Cardiac septum (tissue), 1 donor: ENCODE measurements at regions of chr1 and their contacts with region 1.

Region 1: DNA sequence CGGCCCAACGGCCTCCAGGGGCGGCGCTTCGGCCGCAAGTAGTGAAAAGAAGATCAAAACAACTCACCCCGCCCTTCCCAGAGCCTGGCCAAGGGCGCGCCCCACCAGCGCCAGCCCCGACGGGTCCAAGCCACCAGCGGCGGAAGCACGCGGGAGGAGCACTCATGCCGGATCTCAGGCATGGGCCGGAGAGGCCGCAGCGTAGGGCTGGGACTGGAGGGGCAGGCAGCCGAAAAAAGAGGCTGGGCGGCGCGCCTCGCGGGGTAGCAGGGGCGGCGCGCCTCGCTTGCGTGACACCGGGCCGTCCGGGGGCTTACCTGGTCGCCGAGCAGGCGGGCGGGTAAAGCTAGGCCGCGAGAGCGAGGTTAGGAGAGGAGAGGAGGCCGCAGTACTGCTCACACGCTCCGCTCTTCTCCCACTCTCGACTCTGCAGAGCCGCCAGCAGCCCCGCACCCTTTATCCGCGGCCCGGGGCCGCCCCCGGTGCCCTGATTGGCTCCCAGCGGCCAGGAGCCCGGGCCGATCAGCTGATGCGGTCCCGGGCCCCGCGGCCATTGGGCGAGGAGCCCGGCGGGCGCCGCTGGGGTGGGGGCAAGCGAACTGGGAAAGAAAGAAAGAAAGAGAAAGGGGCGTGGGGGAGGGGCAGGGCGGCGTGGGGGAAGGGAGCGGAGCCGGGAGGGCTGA is at the start of gene GLUL:
- DNase-seq: peak; percentile 96
- total RNA-seq, gene GLUL: 231 TPM

Region 2: GRCh38 chr1:182084487-182085316 is 306.8 kb before region 1 on chr1:
- intact Hi-C with region 1: loop called (anchors 1 kb)
- DNase-seq: peak; percentile 93

Region 3: GRCh38 chr1:182143154-182143657 is 248.3 kb before region 1 on chr1:
- intact Hi-C with region 1: loop called (anchors 1 kb)
- DNase-seq: peak; percentile 95

Region 4: DNA sequence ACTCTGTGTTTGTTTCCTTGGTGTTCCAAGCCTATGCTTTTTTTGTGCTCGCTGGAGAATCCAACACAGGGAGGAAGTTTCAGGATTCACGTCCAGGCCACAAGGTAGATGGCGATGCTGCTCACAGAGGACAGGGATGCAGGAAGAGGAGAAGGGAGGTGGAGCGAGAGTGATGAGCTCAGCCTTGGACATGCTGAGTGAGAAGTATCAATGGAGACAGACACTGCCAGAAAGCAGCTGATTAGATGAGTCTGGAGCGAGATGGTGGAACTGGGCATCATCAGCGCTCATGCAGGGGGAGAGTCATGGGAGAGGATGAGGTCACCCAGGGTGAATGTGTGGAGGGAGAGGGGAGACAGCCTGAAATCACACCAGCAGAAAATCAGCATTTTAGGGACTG is 110.0 kb before region 1 on chr1:
- intact Hi-C with region 1: no loop called
- DNase-seq: no peak

Region 5: GRCh38 chr1:182301467-182302198 is 89.9 kb before region 1 on chr1:
- intact Hi-C with region 1: loop called (anchors 5 kb)
- DNase-seq: no peak

Region 6: DNA sequence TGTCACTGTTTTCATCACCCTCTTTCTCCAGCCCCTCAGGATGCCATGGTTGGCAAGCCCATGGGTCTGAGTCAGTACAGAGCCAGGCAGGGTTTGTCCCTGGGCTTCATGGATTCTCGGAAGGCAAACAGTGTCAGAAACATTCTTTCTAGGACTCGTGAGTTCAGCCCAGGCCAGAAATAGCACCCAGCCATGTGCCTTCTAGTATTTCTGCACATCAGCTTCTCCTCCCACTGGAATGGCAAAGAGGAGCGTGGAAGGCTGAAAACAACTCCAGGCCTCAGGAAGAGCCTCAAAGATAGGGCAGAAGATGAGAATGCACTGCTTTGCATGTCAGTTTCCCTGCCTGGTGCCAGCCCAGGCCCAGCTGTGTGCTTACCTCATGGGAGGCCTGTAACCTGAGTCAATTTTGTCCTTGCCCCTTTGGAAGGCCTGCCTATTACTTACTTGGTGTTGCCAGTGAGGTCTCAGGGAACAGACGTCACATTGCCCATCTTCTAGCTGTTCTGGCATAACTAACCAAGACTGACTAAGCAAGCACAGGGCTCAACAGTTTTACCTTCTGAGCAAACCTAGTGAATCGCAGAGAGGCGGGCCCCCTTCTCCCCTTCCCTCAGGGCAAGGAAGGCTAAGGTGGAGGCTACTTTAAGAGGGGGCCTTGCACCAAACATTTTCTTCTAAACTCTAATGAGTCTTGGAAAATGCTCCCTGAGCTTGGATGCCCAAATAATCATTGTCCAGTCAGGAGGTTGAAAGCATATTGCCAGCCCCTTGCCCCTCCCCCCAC is 42.3 kb before region 1 on chr1:
- intact Hi-C with region 1: loop called (anchors 1 kb)
- DNase-seq: peak; percentile 78

Region 7: DNA sequence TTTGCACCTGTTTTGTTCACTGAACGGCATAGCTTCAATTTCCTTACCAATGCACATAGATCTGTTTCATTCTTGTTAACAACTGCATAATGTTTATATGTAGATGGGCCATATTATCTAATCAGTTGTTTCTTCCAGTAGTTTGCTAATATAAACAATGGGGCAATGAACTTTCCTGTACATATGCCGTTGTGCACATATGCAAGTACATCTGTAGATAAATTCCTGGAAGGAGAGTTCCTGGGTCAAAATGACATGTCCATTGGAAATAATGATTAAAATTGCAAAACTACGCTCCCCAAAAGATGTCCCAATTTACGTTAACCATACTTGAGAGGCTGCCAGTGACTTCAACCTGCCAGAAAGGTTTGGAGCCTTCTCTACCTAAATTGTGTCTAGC is 27.9 kb before region 1 on chr1:
- intact Hi-C with region 1: loop called (anchors 2 kb)
- DNase-seq: no peak

Region 8: DNA sequence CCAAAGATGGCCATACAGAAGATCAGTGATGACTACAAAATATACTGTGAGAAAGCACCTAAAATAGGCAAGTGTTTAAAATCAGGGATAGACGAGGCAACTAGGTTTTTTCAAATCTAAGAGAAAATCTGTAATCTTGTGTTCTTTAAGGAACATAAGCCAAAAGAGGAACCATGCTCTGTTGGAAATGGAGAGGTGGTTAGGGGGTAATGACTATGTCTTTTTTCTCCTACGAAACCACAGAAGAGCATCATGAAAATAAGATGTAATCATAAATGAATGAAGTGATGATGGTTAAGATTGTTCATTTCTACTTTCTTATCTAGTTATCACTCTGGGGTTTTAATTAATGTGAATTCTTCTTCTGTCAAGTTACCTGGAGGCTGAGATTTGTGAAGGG is 101.6 kb after region 1 on chr1:
- intact Hi-C with region 1: no loop called
- DNase-seq: no peak

Region 9: GRCh38 chr1:182520736-182521135 is 129.2 kb after region 1 on chr1:
- intact Hi-C with region 1: no loop called
- DNase-seq: no peak